H1 (cell line): ENCODE measurements at regions of chr6 and their contacts with region 1.

Region 1: DNA sequence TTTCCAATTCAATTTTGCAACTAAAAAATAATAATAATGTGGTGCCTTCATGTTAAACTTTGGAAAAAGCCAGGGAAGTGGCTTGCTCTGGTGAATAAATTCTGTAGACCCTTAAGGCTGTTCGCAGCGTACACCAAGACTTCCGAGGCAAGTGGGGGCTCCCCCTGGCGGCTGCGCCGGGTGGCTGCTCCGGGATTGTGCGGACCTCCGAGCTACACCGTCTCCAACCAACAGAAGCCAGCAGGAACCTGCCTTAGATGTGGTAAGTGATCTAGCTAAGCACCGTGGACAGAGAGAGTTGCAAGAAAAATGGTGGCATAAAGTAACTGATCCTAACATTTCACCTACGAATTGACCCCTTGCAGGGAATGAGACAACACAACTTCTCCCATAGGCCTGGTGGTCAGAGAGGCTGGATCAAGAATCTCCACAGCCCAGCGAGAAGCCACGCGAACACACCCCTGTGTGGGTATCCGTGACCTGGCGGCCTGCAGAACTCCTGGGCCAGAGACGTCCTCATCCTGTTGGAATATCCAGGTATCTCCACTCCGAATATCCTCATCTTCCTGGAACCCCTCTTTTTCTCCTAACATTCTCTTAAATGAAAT is 69.6 kb downstream of the TBXT start:
- DNase-seq: peak; percentile 77 to 94
- H3K4me3 ChIP-seq: peak overlapping the region; percentile 19 to 62 (median 28); a peak in 6 of 8 replicates
- H3K27ac ChIP-seq: no peak overlapping the region
- H3K4me1 ChIP-seq: peaks cover 0 to 2% (median 0%) of the 10 kb centered on the region in 4 experiments; a peak in 1 of 7 replicates
- H3K27me3 ChIP-seq: peaks cover 0 to 2% (median 0%) of the 10 kb centered on the region in 4 experiments; a peak in 1 of 7 replicates
- CTCF ChIP-seq: peak; percentile 88 to 96 (median 92)
- EP300 ChIP-seq: no peak
- POLR2A ChIP-seq: no peak
- RAD21 ChIP-seq: peak; percentile 80 to 90

Region 2: GRCh38 chr6:165884813-165885765 is 212.9 kb before region 1 on chr6:
- CTCF ChIA-PET with region 1: interaction called, 111 read pairs
- POLR2A ChIA-PET with region 1: interaction called, 4 read pairs
- DNase-seq: peak; percentile 47 to 94
- H3K4me3 ChIP-seq: no peak overlapping the region
- H3K27ac ChIP-seq: no peak overlapping the region
- H3K4me1 ChIP-seq: no peaks in the 10 kb centered on the region
- H3K27me3 ChIP-seq: peaks cover 0 to 2% (median 0%) of the 10 kb centered on the region in 4 experiments; a peak in 1 of 7 replicates
- CTCF ChIP-seq: peak; percentile 87 to 97 (median 87)
- EP300 ChIP-seq: no peak
- POLR2A ChIP-seq: no peak
- RAD21 ChIP-seq: peak; percentile 95 to 96

Region 3: GRCh38 chr6:165999279-165999678 is 98.7 kb before region 1 on chr6:
- CTCF ChIA-PET with region 1: interaction called, 13 read pairs
- POLR2A ChIA-PET with region 1: no interaction called
- DNase-seq: no peak
- H3K4me3 ChIP-seq: no peak overlapping the region
- H3K27ac ChIP-seq: no peak overlapping the region
- H3K4me1 ChIP-seq: peaks cover 0 to 6% (median 0%) of the 10 kb centered on the region in 4 experiments; a peak in 2 of 7 replicates
- H3K27me3 ChIP-seq: peaks cover 0 to 9% (median 1%) of the 10 kb centered on the region in 4 experiments; a peak in 4 of 7 replicates
- CTCF ChIP-seq: no peak
- EP300 ChIP-seq: no peak
- POLR2A ChIP-seq: no peak
- RAD21 ChIP-seq: no peak

Region 4: GRCh38 chr6:166032366-166033171 is 65.5 kb before region 1 on chr6:
- CTCF ChIA-PET with region 1: interaction called, 16 read pairs
- POLR2A ChIA-PET with region 1: no interaction called
- DNase-seq: peak in 1 of 2 experiments; percentile 59
- H3K4me3 ChIP-seq: no peak overlapping the region
- H3K27ac ChIP-seq: 0 out of 2 replicates have a peak overlapping the region, but pooled peaks have one; percentile 53
- H3K4me1 ChIP-seq: peaks cover 0 to 4% (median 3%) of the 10 kb centered on the region in 4 experiments; a peak in 6 of 7 replicates
- H3K27me3 ChIP-seq: no peaks in the 10 kb centered on the region
- CTCF ChIP-seq: peak; percentile 32 to 67 (median 48); a peak in 3 of 4 replicates
- EP300 ChIP-seq: no peak
- POLR2A ChIP-seq: no peak
- RAD21 ChIP-seq: peak in 1 of 2 experiments; percentile 32; a peak in 2 of 4 replicates

Region 5: DNA sequence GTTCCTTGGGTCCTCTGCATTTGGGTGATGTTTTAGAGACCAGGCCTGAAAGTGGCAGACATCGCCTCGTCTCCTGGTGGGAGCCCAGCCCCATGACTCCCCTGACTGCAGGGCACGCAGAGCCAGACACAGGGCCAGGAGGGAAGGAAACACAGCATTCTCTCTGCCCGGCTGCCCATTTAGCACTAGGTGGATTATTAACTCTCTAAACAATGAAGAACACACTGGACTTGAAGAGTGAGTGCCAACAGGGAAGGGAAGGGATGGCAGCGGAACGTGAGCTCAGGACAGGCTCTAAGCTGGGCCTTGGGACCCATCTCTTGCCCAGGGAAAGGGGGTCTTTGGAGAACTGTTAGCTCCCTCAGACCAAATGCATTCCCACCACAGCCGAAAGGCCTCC is 10.8 kb before region 1 on chr6:
- CTCF ChIA-PET with region 1: interaction called, 24 read pairs
- POLR2A ChIA-PET with region 1: no interaction called
- DNase-seq: no peak
- H3K4me3 ChIP-seq: no peak overlapping the region
- H3K27ac ChIP-seq: no peak overlapping the region
- H3K4me1 ChIP-seq: no peaks in the 10 kb centered on the region
- H3K27me3 ChIP-seq: peaks cover 0 to 4% (median 0%) of the 10 kb centered on the region in 4 experiments; a peak in 1 of 7 replicates
- CTCF ChIP-seq: no peak
- EP300 ChIP-seq: no peak
- POLR2A ChIP-seq: no peak
- RAD21 ChIP-seq: no peak

Region 6: GRCh38 chr6:166119116-166119911 is 21.3 kb after region 1 on chr6:
- CTCF ChIA-PET with region 1: no interaction called
- POLR2A ChIA-PET with region 1: no interaction called
- DNase-seq: no peak
- H3K4me3 ChIP-seq: no peak overlapping the region
- H3K27ac ChIP-seq: no peak overlapping the region
- H3K4me1 ChIP-seq: no peaks in the 10 kb centered on the region
- H3K27me3 ChIP-seq: no peaks in the 10 kb centered on the region
- CTCF ChIP-seq: no peak
- EP300 ChIP-seq: no peak
- POLR2A ChIP-seq: no peak
- RAD21 ChIP-seq: no peak

Region 7: GRCh38 chr6:166204852-166205650 is 107.0 kb after region 1 on chr6:
- CTCF ChIA-PET with region 1: no interaction called
- POLR2A ChIA-PET with region 1: no interaction called
- DNase-seq: no peak
- H3K4me3 ChIP-seq: no peak overlapping the region
- H3K27ac ChIP-seq: no peak overlapping the region
- H3K4me1 ChIP-seq: peaks cover 0 to 5% (median 0%) of the 10 kb centered on the region in 4 experiments; a peak in 2 of 7 replicates
- H3K27me3 ChIP-seq: peaks cover 0 to 5% (median under 1%) of the 10 kb centered on the region in 4 experiments; a peak in 3 of 7 replicates
- CTCF ChIP-seq: peak in 2 of 3 experiments; percentile 44 to 45; a peak in 3 of 4 replicates
- EP300 ChIP-seq: no peak
- POLR2A ChIP-seq: no peak
- RAD21 ChIP-seq: peak in 1 of 2 experiments; percentile 22; a peak in 2 of 4 replicates